Gastrocnemius medialis (tissue), 4 donors: ENCODE measurements at regions of chr7 and their contacts with region 1.

Region 1: GRCh38 chr7:30983042-30983913 is 19.5 kb downstream of the GHRHR start:
- DNase-seq: peak; percentile 44 to 58
- ATAC-seq: peak; percentile 84 to 86
- H3K4me3 ChIP-seq: no peak overlapping the region
- H3K27ac ChIP-seq: no peak overlapping the region
- H3K4me1 ChIP-seq: no peaks in the 10 kb centered on the region
- H3K27me3 ChIP-seq: no peaks in the 10 kb centered on the region
- CTCF ChIP-seq: peak; percentile 72 to 95 (median 80)
- POLR2A ChIP-seq: no peak

Region 2: GRCh38 chr7:29935111-29935510 is 1048.2 kb before region 1 on chr7:
- in situ Hi-C with region 1: no loop called
- intact Hi-C with region 1: no loop called
- DNase-seq: no peak
- ATAC-seq: no peak
- H3K4me3 ChIP-seq: no peak overlapping the region
- H3K27ac ChIP-seq: no peak overlapping the region
- H3K4me1 ChIP-seq: no peaks in the 10 kb centered on the region
- H3K27me3 ChIP-seq: no peaks in the 10 kb centered on the region
- CTCF ChIP-seq: no peak
- POLR2A ChIP-seq: no peak

Region 3: DNA sequence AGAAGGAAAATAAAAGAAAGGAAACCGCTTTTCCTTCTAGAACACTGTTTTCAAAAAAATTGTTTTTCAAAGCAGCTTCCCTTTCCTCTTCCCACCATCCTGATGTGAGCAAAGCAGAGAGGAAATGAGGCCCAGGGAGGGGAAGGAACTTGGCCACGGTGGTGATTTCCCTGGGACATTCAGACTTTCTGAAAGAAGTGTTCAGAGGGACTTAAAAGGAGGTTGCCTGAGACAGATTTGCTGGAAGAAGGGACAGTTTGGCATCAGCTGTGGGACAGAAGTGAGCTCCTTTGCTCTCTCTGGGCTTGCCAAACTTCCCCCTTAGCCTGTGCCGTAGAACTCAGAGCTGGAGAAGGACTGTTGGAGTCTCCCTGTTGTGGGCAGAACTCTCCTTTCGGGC is 99.2 kb after region 1 on chr7:
- in situ Hi-C with region 1: no loop called
- intact Hi-C with region 1: no loop called
- DNase-seq: no peak
- ATAC-seq: no peak
- H3K4me3 ChIP-seq: no peak overlapping the region
- H3K27ac ChIP-seq: no peak overlapping the region
- H3K4me1 ChIP-seq: peaks cover 0 to 5% of the 10 kb centered on the region in 2 donors
- H3K27me3 ChIP-seq: no peaks in the 10 kb centered on the region
- CTCF ChIP-seq: no peak
- POLR2A ChIP-seq: no peak

Region 4: DNA sequence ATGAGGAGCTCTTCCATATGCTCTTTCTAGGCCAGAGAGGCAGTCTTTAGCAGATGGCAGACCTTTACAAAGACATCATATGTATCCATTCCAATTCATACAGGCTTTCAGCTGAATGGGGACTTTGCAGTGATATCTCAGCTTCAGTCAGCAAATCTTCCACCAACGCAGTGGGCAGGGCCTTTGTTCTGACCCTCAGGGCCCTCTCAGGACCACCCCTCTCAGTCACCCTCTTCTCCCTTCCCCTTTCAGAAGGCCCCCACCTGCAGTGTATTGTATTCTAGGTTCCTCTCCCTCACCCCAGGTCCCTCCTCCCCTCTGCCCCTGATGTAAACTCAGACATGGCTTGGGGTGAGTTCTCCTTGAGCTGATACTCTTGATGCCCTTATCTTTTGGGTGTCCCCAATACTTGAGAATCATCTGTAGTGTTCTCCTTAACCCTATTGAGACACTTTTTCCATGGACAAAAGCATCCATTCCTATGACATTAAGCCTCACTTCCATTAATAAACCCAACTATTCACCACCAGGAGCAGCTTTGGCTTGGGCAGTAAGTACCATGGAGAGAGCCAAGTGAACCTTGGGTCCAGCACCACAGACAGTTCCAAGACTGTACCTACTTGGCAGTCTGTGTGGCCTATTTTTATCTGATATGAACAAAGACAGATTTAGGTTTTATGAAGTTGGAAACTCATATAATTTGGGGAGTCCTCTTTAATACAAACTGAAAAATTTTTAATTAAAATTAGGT is 131.5 kb after region 1 on chr7:
- in situ Hi-C with region 1: loop called in 1 of 4 experiments (anchors 5 kb)
- intact Hi-C with region 1: no loop called
- DNase-seq: no peak
- ATAC-seq: no peak
- H3K4me3 ChIP-seq: no peak overlapping the region
- H3K27ac ChIP-seq: no peak overlapping the region
- H3K4me1 ChIP-seq: no peaks in the 10 kb centered on the region
- H3K27me3 ChIP-seq: no peaks in the 10 kb centered on the region
- CTCF ChIP-seq: no peak
- POLR2A ChIP-seq: no peak

Region 5: DNA sequence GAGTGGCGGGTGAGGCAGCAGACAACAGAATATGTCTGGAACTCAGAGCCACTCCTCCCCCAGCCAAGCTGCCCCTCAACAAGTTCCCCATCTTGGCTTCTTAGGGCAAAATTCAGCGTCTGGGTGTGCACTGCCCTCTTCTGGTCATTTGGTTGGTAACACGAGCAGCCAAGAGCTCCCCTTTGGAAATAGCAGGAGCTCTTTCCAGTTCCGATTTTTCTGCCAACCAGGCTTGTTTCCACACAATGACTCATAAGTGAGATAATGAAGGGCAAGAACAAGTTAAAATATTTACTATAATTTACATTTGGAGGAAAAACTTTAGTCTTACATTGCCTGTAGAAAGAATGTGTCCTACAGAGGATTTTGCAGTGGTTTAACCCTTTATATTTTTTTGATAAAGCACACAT is 139.4 kb after region 1 on chr7:
- in situ Hi-C with region 1: loop called (anchors 5 to 10 kb)
- intact Hi-C with region 1: loop called (anchors 1 kb)
- DNase-seq: peak in 1 of 2 donors; percentile 49
- ATAC-seq: peak; percentile 47 to 78
- H3K4me3 ChIP-seq: no peak overlapping the region
- H3K27ac ChIP-seq: no peak overlapping the region
- H3K4me1 ChIP-seq: no peaks in the 10 kb centered on the region
- H3K27me3 ChIP-seq: no peaks in the 10 kb centered on the region
- CTCF ChIP-seq: peak; percentile 35 to 76 (median 63)
- POLR2A ChIP-seq: no peak